Motor neuron (in vitro differentiated cells): ENCODE measurements at regions of chr6 and their contacts with region 1.

Region 1: GRCh38 chr6:126516411-126516810 is 176.5 kb downstream of the CENPW start:
- ATAC-seq: no peak
- H3K4me3 ChIP-seq: no peak overlapping the region
- H3K27ac ChIP-seq: no peak overlapping the region
- H3K4me1 ChIP-seq: no peaks in the 10 kb centered on the region

Region 2: DNA sequence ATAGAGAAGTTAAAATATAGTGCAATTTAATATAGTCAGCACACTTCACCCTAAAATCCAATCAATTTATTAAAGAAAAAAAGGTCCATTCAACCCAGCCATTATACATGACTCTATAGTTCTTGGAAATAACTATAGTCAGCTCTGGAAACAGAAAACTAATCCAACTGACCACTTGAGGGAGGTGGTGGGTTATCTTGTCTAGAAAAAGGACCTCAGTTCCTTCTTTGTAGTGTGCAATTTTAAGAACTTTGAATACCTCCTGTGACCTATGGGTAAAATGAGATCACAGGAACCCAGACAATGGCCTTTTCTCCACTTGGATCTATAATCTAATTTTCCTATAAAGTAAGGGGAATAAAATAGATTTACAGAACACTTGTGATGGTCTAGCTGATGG is 340.1 kb before region 1 on chr6:
- in situ Hi-C with region 1: loop called in 1 of 9 experiments (anchors 25 kb)
- ATAC-seq: peak in 4 of 8 experiments; percentile 36 to 71 (median 53)
- H3K4me3 ChIP-seq: no peak overlapping the region
- H3K27ac ChIP-seq: no peak overlapping the region
- H3K4me1 ChIP-seq: no peaks in the 10 kb centered on the region